ENCODE measurements at regions of chr1 and their contacts with region 1.

Region 1: GRCh38 chr1:247390116-247390791 is 25.7 kb upstream of the NLRP3 start:
- DNase-seq: peak; percentile 69 to 92 (median 82)
- ATAC-seq: peak; percentile 98
- H3K4me3 ChIP-seq: peak overlapping the region in 1 of 2 experiments; percentile 31
- H3K4me3 Mint-ChIP-seq: peak overlapping the region; percentile 71
- H3K27ac ChIP-seq: peak overlapping the region in 1 of 2 experiments; percentile 17
- H3K27ac Mint-ChIP-seq: peak overlapping the region; percentile 80
- H3K4me1 ChIP-seq: no peaks in the 10 kb centered on the region
- H3K4me1 Mint-ChIP-seq: peaks cover 12% of the 10 kb centered on the region
- H3K27me3 ChIP-seq: no peaks in the 10 kb centered on the region
- H3K27me3 Mint-ChIP-seq: no peaks in the 10 kb centered on the region
- CTCF ChIP-seq: peak; percentile 90

Region 2: GRCh38 chr1:247373721-247374141 is 16.5 kb before region 1 on chr1:
- CTCF ChIA-PET with region 1: interaction called, 40 read pairs
- POLR2A ChIA-PET with region 1: no interaction called
- intact Hi-C with region 1: loop called in 1 of 2 experiments (anchors 1 kb)
- DNase-seq: peak; percentile 9 to 74 (median 65)
- ATAC-seq: peak; percentile 86
- H3K4me3 ChIP-seq: peak overlapping the region in 1 of 2 experiments; percentile 37
- H3K4me3 Mint-ChIP-seq: peak overlapping the region; percentile 56
- H3K27ac ChIP-seq: no peak overlapping the region
- H3K27ac Mint-ChIP-seq: no peak overlapping the region
- H3K4me1 ChIP-seq: no peaks in the 10 kb centered on the region
- H3K4me1 Mint-ChIP-seq: peaks cover 6% of the 10 kb centered on the region
- H3K27me3 ChIP-seq: no peaks in the 10 kb centered on the region
- H3K27me3 Mint-ChIP-seq: peaks cover 2% of the 10 kb centered on the region
- CTCF ChIP-seq: peak; percentile 48

Region 3: DNA sequence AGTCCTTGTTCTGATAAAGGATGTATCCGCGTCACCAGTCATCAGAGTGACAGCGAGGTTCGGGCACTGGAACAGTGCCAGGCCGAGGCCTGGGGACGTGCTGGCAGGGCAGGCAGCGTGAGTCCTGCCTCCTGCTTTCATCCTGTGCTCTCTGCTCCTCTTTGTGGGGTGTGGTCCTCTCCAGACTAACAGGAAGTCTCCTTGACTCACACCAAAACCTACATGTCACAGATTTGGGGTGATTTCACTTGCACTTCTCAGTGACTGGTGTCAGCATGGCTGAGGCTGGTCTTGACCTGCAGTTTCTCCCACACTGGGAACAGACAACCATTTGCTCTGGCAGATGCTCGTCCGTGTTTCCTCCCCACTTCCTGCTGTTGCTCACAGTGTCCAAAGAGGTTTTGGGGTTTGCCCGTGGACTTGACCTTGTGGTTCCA is 16.9 kb after region 1 on chr1:
- CTCF ChIA-PET with region 1: interaction called, 15 read pairs
- POLR2A ChIA-PET with region 1: no interaction called
- intact Hi-C with region 1: loop called in 1 of 2 experiments (anchors 1 kb)
- DNase-seq: peak; percentile 27 to 86 (median 76)
- ATAC-seq: peak; percentile 88
- H3K4me3 ChIP-seq: peak overlapping the region; percentile 7 to 43
- H3K4me3 Mint-ChIP-seq: peak overlapping the region; percentile 65
- H3K27ac ChIP-seq: peak overlapping the region; percentile 52 to 59
- H3K27ac Mint-ChIP-seq: peak overlapping the region; percentile 91
- H3K4me1 ChIP-seq: peaks cover 31% of the 10 kb centered on the region
- H3K4me1 Mint-ChIP-seq: peaks cover 35% of the 10 kb centered on the region
- H3K27me3 ChIP-seq: no peaks in the 10 kb centered on the region
- H3K27me3 Mint-ChIP-seq: no peaks in the 10 kb centered on the region
- CTCF ChIP-seq: no peak

Region 4: DNA sequence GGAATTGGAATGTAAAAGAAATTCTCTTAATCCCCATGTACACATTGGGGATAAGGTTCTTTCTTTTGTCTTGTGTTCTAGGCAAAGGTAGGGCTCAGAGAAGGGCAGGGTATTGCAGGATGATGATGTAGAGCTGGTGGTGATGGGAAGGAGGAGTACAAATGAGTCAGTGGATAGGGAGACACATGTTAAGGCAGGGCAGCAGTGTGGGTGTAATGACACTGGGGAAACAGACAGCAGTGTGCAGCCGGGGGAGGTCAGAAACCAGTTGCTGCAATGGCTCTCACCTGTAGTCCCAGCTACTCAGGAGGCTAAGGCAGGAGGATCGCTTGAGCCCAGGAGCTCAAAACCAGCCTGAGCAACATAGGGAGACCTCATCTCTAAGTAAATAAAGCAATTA is 30.8 kb after region 1 on chr1:
- CTCF ChIA-PET with region 1: interaction called, 17 read pairs
- POLR2A ChIA-PET with region 1: interaction called, 12 read pairs
- intact Hi-C with region 1: no loop called
- DNase-seq: no peak
- ATAC-seq: no peak
- H3K4me3 ChIP-seq: no peak overlapping the region
- H3K4me3 Mint-ChIP-seq: no peak overlapping the region
- H3K27ac ChIP-seq: no peak overlapping the region
- H3K27ac Mint-ChIP-seq: no peak overlapping the region
- H3K4me1 ChIP-seq: peaks cover 11% of the 10 kb centered on the region
- H3K4me1 Mint-ChIP-seq: peaks cover 43% of the 10 kb centered on the region
- H3K27me3 ChIP-seq: no peaks in the 10 kb centered on the region
- H3K27me3 Mint-ChIP-seq: no peaks in the 10 kb centered on the region
- CTCF ChIP-seq: no peak

Region 5: DNA sequence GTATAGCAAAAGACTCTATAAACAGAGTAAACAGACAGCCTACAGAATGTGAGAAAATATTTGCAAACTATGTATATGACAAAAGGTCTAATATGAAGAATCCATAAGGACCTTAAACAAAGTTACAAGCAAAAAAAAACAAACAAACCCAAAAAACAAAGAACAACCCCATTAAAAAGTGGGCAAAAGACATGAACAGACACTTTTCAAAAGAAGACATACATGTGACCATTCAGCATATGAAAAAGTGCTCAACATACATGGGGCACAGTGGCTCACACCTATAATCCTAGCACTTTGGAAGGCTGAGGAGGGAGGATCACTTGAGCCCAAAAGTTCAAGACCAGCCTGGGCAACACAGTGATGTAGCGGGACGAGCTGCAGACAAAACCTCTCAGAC is 85.5 kb after region 1 on chr1:
- CTCF ChIA-PET with region 1: interaction called, 16 read pairs
- POLR2A ChIA-PET with region 1: no interaction called
- intact Hi-C with region 1: no loop called
- DNase-seq: no peak
- ATAC-seq: no peak
- H3K4me3 ChIP-seq: no peak overlapping the region
- H3K4me3 Mint-ChIP-seq: no peak overlapping the region
- H3K27ac ChIP-seq: no peak overlapping the region
- H3K27ac Mint-ChIP-seq: no peak overlapping the region
- H3K4me1 ChIP-seq: no peaks in the 10 kb centered on the region
- H3K4me1 Mint-ChIP-seq: no peaks in the 10 kb centered on the region
- H3K27me3 ChIP-seq: no peaks in the 10 kb centered on the region
- H3K27me3 Mint-ChIP-seq: no peaks in the 10 kb centered on the region
- CTCF ChIP-seq: no peak

Region 6: GRCh38 chr1:247576495-247576894 is 186.2 kb after region 1 on chr1:
- CTCF ChIA-PET with region 1: interaction called, 4 read pairs
- POLR2A ChIA-PET with region 1: no interaction called
- intact Hi-C with region 1: loop called (anchors 2 kb)
- DNase-seq: peak in 1 of 9 experiments; percentile 20
- ATAC-seq: no peak
- H3K4me3 ChIP-seq: no peak overlapping the region
- H3K4me3 Mint-ChIP-seq: no peak overlapping the region
- H3K27ac ChIP-seq: no peak overlapping the region
- H3K27ac Mint-ChIP-seq: no peak overlapping the region
- H3K4me1 ChIP-seq: no peaks in the 10 kb centered on the region
- H3K4me1 Mint-ChIP-seq: no peaks in the 10 kb centered on the region
- H3K27me3 ChIP-seq: no peaks in the 10 kb centered on the region
- H3K27me3 Mint-ChIP-seq: peaks cover 5% of the 10 kb centered on the region
- CTCF ChIP-seq: no peak

Measured in CD8-positive, alpha-beta T cell (primary cell).